OCI-LY7 (cell line): ENCODE measurements at regions of chr1 and their contacts with region 1.

Region 1: GRCh38 chr1:117929173-117929989 is at the starts of genes GDAP2 and WDR3:
- DNase-seq: peak; percentile 99
- H3K4me3 ChIP-seq: peak within 1 kb of the TSS; percentile 93
- H3K27ac ChIP-seq: peak within 1 kb of the TSS; percentile 51
- H3K4me1 ChIP-seq: peaks cover 24% of the 10 kb centered on the region
- CTCF ChIP-seq: no peak
- total RNA-seq, gene GDAP2: 13.9 and 14.9 TPM in 2 replicates
- total RNA-seq, gene WDR3: 23.1 and 39.9 TPM in 2 replicates

Region 2: GRCh38 chr1:117367047-117368018 is 562.0 kb before region 1 on chr1 and contains the start of gene MAN1A2:
- CTCF ChIA-PET with region 1: no interaction called
- POLR2A ChIA-PET with region 1: no interaction called
- intact Hi-C with region 1: loop called (anchors 5 kb)
- DNase-seq: peak; percentile 87
- H3K4me3 ChIP-seq: peak within 1 kb of the TSS; percentile 88
- H3K27ac ChIP-seq: peak within 1 kb of the TSS; percentile 74
- H3K4me1 ChIP-seq: peaks cover 40% of the 10 kb centered on the region
- CTCF ChIP-seq: no peak
- total RNA-seq, gene MAN1A2: 16.1 and 18.9 TPM in 2 replicates

Region 3: GRCh38 chr1:117694543-117694942 is 234.8 kb before region 1 on chr1:
- CTCF ChIA-PET with region 1: no interaction called
- POLR2A ChIA-PET with region 1: interaction called, 10 read pairs
- intact Hi-C with region 1: no loop called
- DNase-seq: no peak
- H3K4me3 ChIP-seq: no peak overlapping the region
- H3K27ac ChIP-seq: no peak overlapping the region
- H3K4me1 ChIP-seq: peaks cover 6% of the 10 kb centered on the region
- CTCF ChIP-seq: no peak

Region 4: GRCh38 chr1:117942293-117942692 is 12.9 kb after region 1 on chr1:
- CTCF ChIA-PET with region 1: no interaction called
- POLR2A ChIA-PET with region 1: interaction called, 10 read pairs
- intact Hi-C with region 1: no loop called
- DNase-seq: no peak
- H3K4me3 ChIP-seq: no peak overlapping the region
- H3K27ac ChIP-seq: no peak overlapping the region
- H3K4me1 ChIP-seq: no peaks in the 10 kb centered on the region
- CTCF ChIP-seq: no peak